Endothelial cell of umbilical vein (primary cell): ENCODE measurements at regions of chr10 and their contacts with region 1.

Region 1: GRCh38 chr10:123559066-123559822 is 106.9 kb upstream of the GPR26 start:
- DNase-seq: peak; percentile 56
- H3K4me3 ChIP-seq: no peak overlapping the region
- H3K27ac ChIP-seq: no peak overlapping the region
- H3K4me1 ChIP-seq: no peaks in the 10 kb centered on the region
- H3K27me3 ChIP-seq: no peaks in the 10 kb centered on the region
- CTCF ChIP-seq: peak; percentile 91 to 96
- POLR2A ChIP-seq: no peak

Region 2: DNA sequence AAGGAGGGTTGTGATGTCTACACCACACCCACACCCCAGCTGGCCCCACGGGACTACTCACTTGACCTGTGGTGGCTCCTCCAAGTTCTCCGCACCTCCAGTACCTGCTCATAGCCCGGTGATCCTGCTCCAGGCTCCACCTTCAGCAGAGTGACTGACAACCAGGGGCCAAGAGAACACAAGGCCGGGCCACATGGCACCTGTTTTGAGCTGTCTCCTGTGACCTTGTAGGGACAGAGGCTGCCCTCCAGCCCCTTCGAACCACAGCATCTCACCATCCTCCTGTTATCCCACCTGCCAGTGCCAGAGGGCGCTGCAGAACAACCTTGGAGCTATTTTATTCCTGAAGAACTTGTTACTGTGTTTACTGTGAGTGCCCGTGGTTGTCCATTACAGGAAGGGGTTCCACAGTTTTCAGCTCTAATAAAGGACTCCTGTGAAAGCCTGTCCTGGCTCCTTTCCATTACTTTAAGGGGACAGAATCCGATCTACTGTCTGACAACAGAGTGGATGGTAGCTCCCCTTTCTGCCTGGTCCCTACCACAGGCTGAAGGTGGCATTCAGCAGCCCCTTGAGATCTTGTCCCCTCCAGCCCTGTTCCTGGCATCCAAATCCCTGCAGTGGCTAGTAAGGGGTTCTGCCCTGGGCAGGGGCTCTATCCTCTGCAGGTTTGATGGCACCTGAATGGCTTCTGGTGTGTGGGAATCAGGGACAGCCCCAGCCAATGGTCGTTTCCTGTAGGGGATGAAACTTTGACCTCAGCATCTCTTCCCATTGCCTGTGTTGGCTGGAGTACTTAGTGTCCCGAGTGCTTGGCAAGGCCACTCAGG is 910.4 kb before region 1 on chr10:
- CTCF ChIA-PET with region 1: interaction called, 9 read pairs
- POLR2A ChIA-PET with region 1: no interaction called
- dilution Hi-C with region 1: no loop called
- intact Hi-C with region 1: loop called (anchors 1 kb)
- DNase-seq: peak; percentile 50
- H3K4me3 ChIP-seq: no peak overlapping the region
- H3K27ac ChIP-seq: no peak overlapping the region
- H3K4me1 ChIP-seq: no peaks in the 10 kb centered on the region
- H3K27me3 ChIP-seq: peaks cover 3 to 9% of the 10 kb centered on the region in 2 experiments
- CTCF ChIP-seq: peak; percentile 72 to 75
- POLR2A ChIP-seq: no peak

Region 3: GRCh38 chr10:122703439-122704118 is 855.7 kb before region 1 on chr10:
- CTCF ChIA-PET with region 1: no interaction called
- POLR2A ChIA-PET with region 1: no interaction called
- dilution Hi-C with region 1: no loop called
- intact Hi-C with region 1: loop called (anchors 2 kb)
- DNase-seq: peak; percentile 55
- H3K4me3 ChIP-seq: no peak overlapping the region
- H3K27ac ChIP-seq: no peak overlapping the region
- H3K4me1 ChIP-seq: no peaks in the 10 kb centered on the region
- H3K27me3 ChIP-seq: peaks cover 0 to 2% of the 10 kb centered on the region in 2 experiments
- CTCF ChIP-seq: peak; percentile 74 to 90
- POLR2A ChIP-seq: no peak

Region 4: DNA sequence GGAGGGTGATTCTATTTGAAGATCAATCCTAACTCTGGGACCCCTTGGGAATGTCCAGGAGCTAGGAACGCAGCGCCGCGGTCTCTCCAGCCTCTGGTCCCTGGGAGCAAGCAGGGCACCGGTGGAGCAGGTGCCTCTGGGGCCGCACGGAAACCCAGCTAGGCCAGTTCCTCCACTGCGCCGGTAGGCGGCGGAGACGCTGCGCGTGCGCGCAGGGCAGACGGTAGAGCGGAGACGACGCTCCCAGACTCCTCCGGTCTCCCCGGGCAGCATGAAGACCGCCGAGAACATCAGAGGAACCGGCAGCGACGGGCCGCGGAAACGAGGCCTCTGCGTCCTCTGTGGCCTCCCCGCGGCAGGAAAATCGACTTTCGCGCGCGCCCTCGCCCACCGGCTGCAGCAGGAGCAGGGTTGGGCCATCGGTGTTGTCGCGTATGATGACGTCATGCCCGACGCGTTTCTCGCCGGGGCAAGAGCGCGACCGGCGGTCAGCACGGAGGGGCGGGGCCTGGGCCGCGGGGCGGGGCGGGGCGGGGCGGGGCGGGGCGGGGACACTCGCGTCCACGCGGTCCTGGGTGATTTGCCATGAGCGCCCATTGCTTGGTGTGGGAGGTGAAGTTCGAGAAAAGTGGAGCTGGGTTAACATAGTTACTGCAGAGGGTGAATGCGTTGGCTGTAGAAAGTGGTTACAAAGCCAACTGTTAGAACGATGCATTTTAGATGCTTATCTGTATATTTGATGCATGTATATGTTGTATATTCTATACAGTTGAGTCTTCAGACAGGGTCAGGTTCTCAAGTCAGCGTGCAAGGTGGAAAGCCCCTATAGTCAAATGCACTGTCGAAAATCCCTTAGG is 578.8 kb before region 1 on chr10 and contains the start of gene PSTK:
- CTCF ChIA-PET with region 1: no interaction called
- POLR2A ChIA-PET with region 1: no interaction called
- dilution Hi-C with region 1: no loop called
- intact Hi-C with region 1: loop called (anchors 1 kb)
- DNase-seq: peak; percentile 92
- H3K4me3 ChIP-seq: peak within 1 kb of the TSS; percentile 36 to 80 (median 55)
- H3K27ac ChIP-seq: peak within 1 kb of the TSS; percentile 82
- H3K4me1 ChIP-seq: peaks cover 8% of the 10 kb centered on the region
- H3K27me3 ChIP-seq: peaks cover 0 to 1% of the 10 kb centered on the region in 2 experiments
- CTCF ChIP-seq: peak; percentile 84 to 97
- POLR2A ChIP-seq: peak; percentile 56
- total RNA-seq, gene PSTK: 1.6 and 2.7 TPM in 2 replicates

Region 5: DNA sequence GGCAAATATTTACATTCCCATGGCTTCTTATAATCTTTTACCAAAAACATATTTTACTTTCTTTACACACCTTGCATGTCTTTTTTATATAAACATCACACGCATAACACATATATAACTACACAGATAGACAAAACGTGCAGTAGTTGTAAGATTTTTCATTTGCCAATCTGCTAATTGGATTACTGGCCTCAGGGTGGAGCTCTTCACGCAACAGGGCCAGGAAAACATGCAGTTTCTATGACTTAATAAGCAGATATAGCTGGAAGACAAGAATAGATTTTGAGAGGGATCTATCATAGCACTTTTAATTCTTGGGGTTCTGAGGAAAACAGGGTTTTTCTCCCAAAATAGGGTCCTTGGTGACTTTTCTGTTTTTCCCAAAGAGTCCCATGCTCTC is 537.7 kb before region 1 on chr10:
- CTCF ChIA-PET with region 1: interaction called, 11 read pairs
- POLR2A ChIA-PET with region 1: no interaction called
- dilution Hi-C with region 1: no loop called
- intact Hi-C with region 1: no loop called
- DNase-seq: peak; percentile 20
- H3K4me3 ChIP-seq: no peak overlapping the region
- H3K27ac ChIP-seq: no peak overlapping the region
- H3K4me1 ChIP-seq: no peaks in the 10 kb centered on the region
- H3K27me3 ChIP-seq: no peaks in the 10 kb centered on the region
- CTCF ChIP-seq: peak; percentile 15 to 41
- POLR2A ChIP-seq: no peak

Region 6: DNA sequence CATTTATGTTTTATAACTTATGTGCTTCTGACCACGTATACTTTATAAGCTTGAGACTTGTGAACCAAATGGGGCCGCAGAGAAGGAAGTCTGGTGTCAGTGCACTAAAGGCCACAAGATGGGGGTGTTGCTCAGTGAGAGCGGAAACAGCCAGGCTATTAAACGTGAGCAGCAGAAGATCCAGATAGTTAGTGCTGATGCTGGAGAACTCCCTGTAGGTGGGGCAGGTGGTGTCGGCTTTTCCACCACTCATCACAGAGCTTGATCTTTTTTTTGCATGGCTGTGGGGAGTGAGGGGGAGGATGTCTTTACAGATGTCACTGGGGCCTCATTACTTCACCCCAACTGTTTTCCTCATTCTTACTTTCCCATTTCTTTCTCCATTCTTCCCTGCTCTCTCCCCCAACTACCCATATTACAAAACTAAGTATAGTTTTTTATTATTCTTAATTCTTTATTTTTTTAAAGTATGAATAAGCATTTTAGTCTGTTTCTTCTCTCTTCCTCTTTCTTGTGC is 515.8 kb before region 1 on chr10:
- CTCF ChIA-PET with region 1: interaction called, 15 read pairs
- POLR2A ChIA-PET with region 1: no interaction called
- dilution Hi-C with region 1: no loop called
- intact Hi-C with region 1: loop called (anchors 1 kb)
- DNase-seq: peak; percentile 61
- H3K4me3 ChIP-seq: no peak overlapping the region
- H3K27ac ChIP-seq: no peak overlapping the region
- H3K4me1 ChIP-seq: no peaks in the 10 kb centered on the region
- H3K27me3 ChIP-seq: no peaks in the 10 kb centered on the region
- CTCF ChIP-seq: peak; percentile 59 to 76
- POLR2A ChIP-seq: no peak

Region 7: DNA sequence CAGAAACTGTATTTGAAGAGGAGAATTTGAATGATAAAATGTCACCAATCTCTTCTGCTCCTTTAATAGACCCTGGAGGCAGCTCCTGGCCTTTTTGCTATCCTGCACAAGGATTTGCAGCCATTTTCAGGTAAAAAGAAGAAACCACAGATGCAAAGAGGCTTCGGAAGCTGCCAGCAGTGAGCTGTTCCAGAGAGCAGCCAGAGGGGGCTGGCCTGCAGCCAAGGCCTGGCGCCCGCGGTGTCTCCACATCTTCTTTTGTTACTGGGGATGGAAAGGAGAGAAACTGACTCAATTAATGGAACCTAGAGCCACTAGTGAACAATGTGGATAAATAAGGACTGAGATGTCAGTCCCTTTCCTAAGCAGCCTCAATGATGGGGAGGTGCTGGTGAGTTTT is 83.0 kb after region 1 on chr10:
- CTCF ChIA-PET with region 1: no interaction called
- POLR2A ChIA-PET with region 1: no interaction called
- dilution Hi-C with region 1: no loop called
- intact Hi-C with region 1: no loop called
- DNase-seq: no peak
- H3K4me3 ChIP-seq: no peak overlapping the region
- H3K27ac ChIP-seq: no peak overlapping the region
- H3K4me1 ChIP-seq: no peaks in the 10 kb centered on the region
- H3K27me3 ChIP-seq: no peaks in the 10 kb centered on the region
- CTCF ChIP-seq: no peak
- POLR2A ChIP-seq: no peak